ENCODE measurements at regions of chrX and their contacts with region 1.

Region 1: GRCh38 chrX:131792789-131793462 is 230.2 kb upstream of the STK26 start:
- DNase-seq: peak; percentile 84
- H3K4me3 ChIP-seq: peak overlapping the region; percentile 36 to 50 (median 42)
- H3K27ac ChIP-seq: peak overlapping the region; percentile 63
- H3K4me1 ChIP-seq: peaks cover 12% of the 10 kb centered on the region
- H3K27me3 ChIP-seq: peaks cover 2% of the 10 kb centered on the region
- CTCF ChIP-seq: peak; percentile 20 to 57

Region 2: GRCh38 chrX:131262737-131263679 is 529.9 kb before region 1 on chrX:
- CTCF ChIA-PET with region 1: no interaction called
- dilution Hi-C with region 1: no loop called
- in situ Hi-C with region 1: no loop called
- intact Hi-C with region 1: no loop called
- DNase-seq: no peak
- H3K4me3 ChIP-seq: no peak overlapping the region
- H3K27ac ChIP-seq: no peak overlapping the region
- H3K4me1 ChIP-seq: no peaks in the 10 kb centered on the region
- H3K27me3 ChIP-seq: no peaks in the 10 kb centered on the region
- CTCF ChIP-seq: peak; percentile 34 to 45

Region 3: GRCh38 chrX:131477498-131477897 is 315.4 kb before region 1 on chrX:
- CTCF ChIA-PET with region 1: no interaction called
- dilution Hi-C with region 1: no loop called
- in situ Hi-C with region 1: no loop called
- intact Hi-C with region 1: no loop called
- DNase-seq: no peak
- H3K4me3 ChIP-seq: no peak overlapping the region
- H3K27ac ChIP-seq: no peak overlapping the region
- H3K4me1 ChIP-seq: no peaks in the 10 kb centered on the region
- H3K27me3 ChIP-seq: no peaks in the 10 kb centered on the region
- CTCF ChIP-seq: no peak

Region 4: GRCh38 chrX:131704136-131704695 is 88.7 kb before region 1 on chrX:
- CTCF ChIA-PET with region 1: no interaction called
- dilution Hi-C with region 1: loop called (anchors 10 kb)
- in situ Hi-C with region 1: no loop called
- intact Hi-C with region 1: loop called (anchors 1 kb)
- DNase-seq: peak; percentile 69
- H3K4me3 ChIP-seq: peak overlapping the region; percentile 49 to 55 (median 51)
- H3K27ac ChIP-seq: peak overlapping the region; percentile 12
- H3K4me1 ChIP-seq: no peaks in the 10 kb centered on the region
- H3K27me3 ChIP-seq: no peaks in the 10 kb centered on the region
- CTCF ChIP-seq: peak; percentile 45 to 56

Region 5: GRCh38 chrX:131728295-131729145 is 64.4 kb before region 1 on chrX:
- CTCF ChIA-PET with region 1: no interaction called
- dilution Hi-C with region 1: no loop called
- in situ Hi-C with region 1: no loop called
- intact Hi-C with region 1: loop called (anchors 1 kb)
- DNase-seq: peak; percentile 78
- H3K4me3 ChIP-seq: peak overlapping the region; percentile 33 to 49 (median 40)
- H3K27ac ChIP-seq: peak overlapping the region; percentile 36
- H3K4me1 ChIP-seq: no peaks in the 10 kb centered on the region
- H3K27me3 ChIP-seq: no peaks in the 10 kb centered on the region
- CTCF ChIP-seq: peak; percentile 33 to 60

Region 6: GRCh38 chrX:131746474-131746968 is 46.4 kb before region 1 on chrX:
- CTCF ChIA-PET with region 1: no interaction called
- dilution Hi-C with region 1: no loop called
- in situ Hi-C with region 1: no loop called
- intact Hi-C with region 1: loop called (anchors 1 kb)
- DNase-seq: peak; percentile 79
- H3K4me3 ChIP-seq: peak overlapping the region; percentile 54 to 66 (median 57)
- H3K27ac ChIP-seq: peak overlapping the region; percentile 57
- H3K4me1 ChIP-seq: no peaks in the 10 kb centered on the region
- H3K27me3 ChIP-seq: no peaks in the 10 kb centered on the region
- CTCF ChIP-seq: peak; percentile 22 to 45

Region 7: DNA sequence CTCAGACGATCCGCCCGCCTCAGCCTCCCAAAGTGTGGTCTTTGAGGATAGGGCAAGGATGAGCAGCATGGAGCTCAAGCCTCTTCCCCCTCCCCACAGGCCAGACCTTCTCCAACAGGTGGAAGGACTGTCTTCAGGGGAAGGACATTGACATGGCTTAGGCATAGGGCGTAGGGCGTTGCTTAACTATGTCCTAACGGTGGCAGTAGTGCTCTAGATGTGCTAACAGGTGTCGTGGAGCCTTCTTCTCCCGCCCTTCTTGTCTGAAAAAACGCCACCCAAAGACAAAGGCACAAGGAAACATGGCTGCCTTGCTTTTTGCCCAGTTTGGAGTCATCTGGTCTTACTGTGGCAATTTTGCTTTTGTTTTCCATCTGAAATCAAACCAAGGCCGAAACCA is 29.3 kb before region 1 on chrX:
- CTCF ChIA-PET with region 1: no interaction called
- dilution Hi-C with region 1: no loop called
- in situ Hi-C with region 1: no loop called
- intact Hi-C with region 1: loop called (anchors 1 kb)
- DNase-seq: peak; percentile 77
- H3K4me3 ChIP-seq: peak overlapping the region; percentile 5 to 41 (median 19)
- H3K27ac ChIP-seq: no peak overlapping the region
- H3K4me1 ChIP-seq: peaks cover 7% of the 10 kb centered on the region
- H3K27me3 ChIP-seq: no peaks in the 10 kb centered on the region
- CTCF ChIP-seq: peak; percentile 40 to 74

Region 8: GRCh38 chrX:131802835-131803626 is 10.1 kb after region 1 on chrX:
- CTCF ChIA-PET with region 1: no interaction called
- dilution Hi-C with region 1: no loop called
- in situ Hi-C with region 1: no loop called
- intact Hi-C with region 1: loop called (anchors 1 kb)
- DNase-seq: peak; percentile 55
- H3K4me3 ChIP-seq: peak overlapping the region in 2 of 3 experiments; percentile 20 to 51
- H3K27ac ChIP-seq: no peak overlapping the region
- H3K4me1 ChIP-seq: no peaks in the 10 kb centered on the region
- H3K27me3 ChIP-seq: no peaks in the 10 kb centered on the region
- CTCF ChIP-seq: peak; percentile 33 to 72

Region 9: GRCh38 chrX:131821945-131822622 is 29.2 kb after region 1 on chrX:
- CTCF ChIA-PET with region 1: no interaction called
- dilution Hi-C with region 1: no loop called
- in situ Hi-C with region 1: no loop called
- intact Hi-C with region 1: loop called (anchors 1 kb)
- DNase-seq: peak; percentile 69
- H3K4me3 ChIP-seq: peak overlapping the region; percentile 36 to 48 (median 45)
- H3K27ac ChIP-seq: peak overlapping the region; percentile 55
- H3K4me1 ChIP-seq: no peaks in the 10 kb centered on the region
- H3K27me3 ChIP-seq: no peaks in the 10 kb centered on the region
- CTCF ChIP-seq: peak; percentile 31 to 43

Region 10: DNA sequence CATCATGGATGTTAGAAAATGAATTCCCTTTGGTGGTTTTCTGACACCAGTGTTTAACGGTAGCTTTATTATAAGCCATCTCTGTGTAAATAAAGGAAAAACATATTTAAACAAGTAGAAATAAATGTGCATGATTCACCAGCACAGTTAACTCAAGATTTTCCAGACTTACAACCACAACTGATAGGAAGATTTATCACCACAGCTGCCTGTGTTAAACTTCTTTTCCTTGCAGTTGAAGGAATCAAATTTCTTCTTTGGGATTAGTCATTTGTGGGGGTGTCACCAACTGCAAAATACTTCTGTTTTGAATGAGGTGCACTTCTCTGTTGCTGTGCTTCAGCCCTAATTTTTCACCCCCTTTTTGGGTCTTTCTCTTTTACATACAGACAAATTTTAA is 102.1 kb after region 1 on chrX:
- CTCF ChIA-PET with region 1: no interaction called
- dilution Hi-C with region 1: no loop called
- in situ Hi-C with region 1: no loop called
- intact Hi-C with region 1: no loop called
- DNase-seq: peak; percentile 40
- H3K4me3 ChIP-seq: no peak overlapping the region
- H3K27ac ChIP-seq: no peak overlapping the region
- H3K4me1 ChIP-seq: no peaks in the 10 kb centered on the region
- H3K27me3 ChIP-seq: peaks cover 4% of the 10 kb centered on the region
- CTCF ChIP-seq: no peak